ENCODE measurements at regions of chr5 and their contacts with region 1.

Region 1: DNA sequence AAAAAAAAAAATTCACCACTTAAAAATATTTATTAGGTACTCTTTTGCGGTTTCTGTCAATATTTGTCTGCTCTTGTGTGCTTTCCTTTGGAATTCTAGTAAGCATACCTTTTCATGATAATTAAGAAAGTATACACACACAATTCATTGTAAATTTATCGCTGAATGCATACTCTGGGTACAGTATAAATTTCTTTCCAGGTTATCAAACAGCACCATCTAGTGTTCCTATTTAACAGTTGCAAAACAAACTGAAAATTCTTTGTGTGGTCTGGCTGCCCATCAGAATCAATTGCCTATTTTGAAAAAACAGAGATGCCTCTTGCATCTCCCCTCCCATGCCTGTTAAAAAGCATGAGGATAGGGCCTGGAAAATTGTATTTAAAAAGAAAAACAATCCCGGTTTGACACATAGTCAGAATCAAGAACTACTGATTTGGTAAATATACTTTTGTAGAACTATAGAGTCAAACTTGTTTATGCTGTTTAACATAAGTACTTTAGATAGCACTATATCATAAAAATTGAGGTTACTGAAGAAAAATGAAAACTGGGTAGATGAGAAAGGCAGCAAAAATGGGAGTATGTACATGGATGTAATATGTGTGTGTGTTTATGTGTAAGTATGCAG is 16.2 kb downstream of the PGGT1B start:
- DNase-seq: no peak
- ATAC-seq: peak in 1 of 2 donors; percentile 33
- H3K4me3 ChIP-seq: no peak overlapping the region
- H3K27ac ChIP-seq: no peak overlapping the region
- H3K4me1 ChIP-seq: peaks cover 7 to 12% of the 10 kb centered on the region in 2 donors
- H3K27me3 ChIP-seq: no peaks in the 10 kb centered on the region
- CTCF ChIP-seq: peak; percentile 26 to 77 (median 62)
- POLR2A ChIP-seq: no peak

Region 2: GRCh38 chr5:115098041-115098702 is 148.3 kb before region 1 on chr5:
- in situ Hi-C with region 1: loop called in 3 of 4 experiments (anchors 5 to 10 kb)
- intact Hi-C with region 1: loop called (anchors 1 kb)
- DNase-seq: no peak
- ATAC-seq: no peak
- H3K4me3 ChIP-seq: no peak overlapping the region
- H3K27ac ChIP-seq: no peak overlapping the region
- H3K4me1 ChIP-seq: no peaks in the 10 kb centered on the region
- H3K27me3 ChIP-seq: no peaks in the 10 kb centered on the region
- CTCF ChIP-seq: peak in 3 of 5 experiments; percentile 27 to 64 (median 48)
- POLR2A ChIP-seq: no peak

Measured in gastrocnemius medialis (tissue), 4 donors.